ENCODE measurements at regions of chr2 and their contacts with region 1.

Region 1: GRCh38 chr2:68467077-68467960 is at the starts of genes APLF and FBXO48:
- DNase-seq: peak; percentile 97 to 99
- ATAC-seq: peak; percentile 95 to 99
- H3K4me3 ChIP-seq: peak within 1 kb of the TSS; percentile 78
- H3K27ac ChIP-seq: peak within 1 kb of the TSS; percentile 85 to 92
- H3K4me1 ChIP-seq: peaks cover 22% of the 10 kb centered on the region
- CTCF ChIP-seq: no peak
- EP300 ChIP-seq: no peak
- POLR2A ChIP-seq: peak; percentile 63
- RAD21 ChIP-seq: no peak
- polyA plus RNA-seq, gene APLF: 2.1 and 2.8 TPM in 2 replicates
- polyA plus RNA-seq, gene FBXO48: 1.4 and 2.1 TPM in 2 replicates

Region 2: GRCh38 chr2:68151037-68151436 is 316.3 kb before region 1 on chr2:
- CTCF ChIA-PET with region 1: no interaction called
- POLR2A ChIA-PET with region 1: no interaction called
- DNase-seq: no peak
- ATAC-seq: no peak
- H3K4me3 ChIP-seq: no peak overlapping the region
- H3K27ac ChIP-seq: no peak overlapping the region
- H3K4me1 ChIP-seq: peaks cover 5% of the 10 kb centered on the region; the same call in 1 of the 3 replicates
- CTCF ChIP-seq: no peak
- EP300 ChIP-seq: no peak
- POLR2A ChIP-seq: no peak
- RAD21 ChIP-seq: no peak

Region 3: DNA sequence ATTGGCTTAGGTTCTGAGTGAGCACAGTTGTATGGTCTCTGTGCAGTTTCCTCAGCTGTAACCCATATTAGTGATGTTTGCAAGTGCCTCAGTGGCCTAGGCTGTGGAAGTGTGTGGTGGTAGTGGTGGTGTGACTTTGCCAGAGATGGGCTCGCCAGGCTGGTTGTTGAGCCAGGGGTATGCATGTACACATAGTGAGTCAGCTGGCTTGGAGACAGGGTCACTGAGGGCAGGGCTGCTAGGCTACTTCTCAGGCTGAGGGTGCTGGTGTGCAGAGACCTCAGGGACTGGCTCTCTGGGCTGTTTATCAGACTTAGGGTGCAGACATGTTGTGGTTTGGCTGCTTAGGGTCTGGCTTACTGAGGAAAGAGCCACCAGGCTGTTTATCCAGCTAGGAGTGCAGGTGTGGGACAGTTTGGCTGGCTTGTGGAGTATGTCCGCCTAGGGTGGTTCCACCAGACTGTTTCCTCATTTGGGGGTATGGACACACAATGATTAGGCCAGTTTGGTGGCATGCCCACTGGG is 15.0 kb after region 1 on chr2:
- CTCF ChIA-PET with region 1: interaction called, 14 read pairs
- POLR2A ChIA-PET with region 1: interaction called, 5 read pairs
- DNase-seq: no peak
- ATAC-seq: no peak; a peak in 2 of 6 replicates
- H3K4me3 ChIP-seq: no peak overlapping the region
- H3K27ac ChIP-seq: no peak overlapping the region
- H3K4me1 ChIP-seq: peaks cover 4% of the 10 kb centered on the region; the same call in 1 of the 3 replicates
- CTCF ChIP-seq: no peak
- EP300 ChIP-seq: no peak
- POLR2A ChIP-seq: no peak
- RAD21 ChIP-seq: no peak

Region 4: DNA sequence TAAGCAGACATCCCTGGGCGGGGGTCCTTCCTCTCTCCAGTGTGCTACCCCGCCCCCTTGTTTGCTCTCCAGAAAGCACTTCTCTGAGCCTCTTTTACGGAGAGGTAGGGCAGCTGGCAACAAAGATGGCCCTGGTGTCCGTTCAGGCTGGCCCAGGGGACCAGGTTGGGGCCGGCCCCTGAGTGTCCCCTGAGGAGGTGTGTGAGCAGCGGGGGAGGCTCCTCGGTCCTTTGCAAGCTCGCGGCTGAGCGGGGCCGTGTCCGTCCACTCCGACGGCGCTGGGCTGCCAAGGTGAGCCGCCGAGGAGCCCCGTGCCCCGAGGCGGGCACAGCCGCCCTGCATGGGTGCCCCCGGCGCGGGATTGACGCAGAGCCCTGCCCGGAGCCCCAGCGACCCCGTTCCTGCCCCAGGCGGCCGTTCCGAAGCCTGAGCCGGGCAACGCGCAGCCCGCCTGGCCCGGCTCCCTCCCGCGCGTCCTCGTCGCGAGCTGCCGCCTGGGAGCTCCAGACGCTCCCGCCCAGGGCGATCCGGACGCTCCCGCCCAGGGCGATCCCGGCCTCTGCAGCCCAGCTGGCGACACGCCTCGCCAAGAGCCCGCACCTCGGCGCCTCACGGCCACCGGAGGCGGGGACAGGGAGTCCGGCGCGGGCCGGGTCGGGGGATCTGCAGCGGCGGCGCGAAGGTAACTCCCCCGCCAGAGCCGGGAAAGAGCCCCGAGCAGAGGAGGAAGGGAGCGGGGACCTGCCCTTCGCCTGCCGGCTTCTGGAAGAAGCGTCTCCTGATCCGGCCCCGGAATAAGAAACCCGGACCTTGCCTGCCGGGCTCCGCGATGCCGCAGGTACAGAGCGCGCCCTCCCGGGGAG is 175.9 kb after region 1 on chr2 and contains the start of gene PROKR1:
- CTCF ChIA-PET with region 1: interaction called, 15 read pairs
- POLR2A ChIA-PET with region 1: no interaction called
- DNase-seq: peak; percentile 7 to 22
- ATAC-seq: peak; percentile 74 to 85
- H3K4me3 ChIP-seq: peak within 1 kb of the TSS; percentile 57
- H3K27ac ChIP-seq: peak within 1 kb of the TSS; percentile 11 to 66; a peak in 4 of 6 replicates
- H3K4me1 ChIP-seq: peaks cover 9% of the 10 kb centered on the region; the same call in 1 of the 3 replicates
- CTCF ChIP-seq: no peak
- EP300 ChIP-seq: no peak
- POLR2A ChIP-seq: no peak
- RAD21 ChIP-seq: no peak
- polyA plus RNA-seq, gene PROKR1: not detected in 2 replicates

Region 5: DNA sequence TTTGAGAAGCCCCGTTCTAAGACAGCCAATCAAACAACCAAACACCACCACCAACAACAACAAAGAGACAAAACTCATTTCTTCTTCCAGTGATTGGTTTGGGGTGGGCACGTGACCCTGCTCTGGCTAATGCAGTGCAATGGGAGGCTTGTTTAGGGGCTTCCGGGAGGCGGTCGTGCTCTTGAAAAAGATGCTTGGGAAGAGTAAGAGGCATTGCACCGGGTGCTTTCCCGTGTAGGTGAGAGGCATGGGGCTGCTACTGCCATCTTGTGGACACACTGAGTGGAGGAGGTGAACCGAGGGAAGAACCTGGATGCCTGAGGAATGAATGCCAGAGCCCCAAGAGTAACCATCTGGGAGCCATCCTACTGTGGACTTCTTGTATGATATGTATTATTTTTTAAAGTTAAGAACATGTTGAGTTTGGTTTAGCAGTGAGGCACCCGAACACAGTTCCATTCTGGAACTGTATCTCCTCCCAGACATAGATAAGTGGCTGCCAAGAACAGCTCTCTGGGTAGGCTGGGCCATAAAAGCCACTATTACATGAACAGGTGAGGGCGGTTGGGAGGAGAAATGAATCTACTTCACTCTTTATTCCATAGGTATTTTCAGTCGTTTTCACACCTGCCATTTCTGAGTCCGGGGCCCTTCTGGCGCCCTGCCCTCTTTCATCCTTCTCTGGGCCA is 248.2 kb after region 1 on chr2:
- CTCF ChIA-PET with region 1: interaction called, 31 read pairs
- POLR2A ChIA-PET with region 1: no interaction called
- DNase-seq: peak; percentile 76 to 81
- ATAC-seq: peak; percentile 96 to 99
- H3K4me3 ChIP-seq: no peak overlapping the region
- H3K27ac ChIP-seq: no peak overlapping the region
- H3K4me1 ChIP-seq: no peaks in the 10 kb centered on the region; the same call in 2 of the 3 replicates
- CTCF ChIP-seq: peak; percentile 81
- EP300 ChIP-seq: no peak
- POLR2A ChIP-seq: no peak
- RAD21 ChIP-seq: peak; percentile 60 to 67